Activated B cell treated with CpG ODN at 0.5 μM for 24 hours (primary cell): ENCODE measurements at regions of chr9 and their contacts with region 1.

Region 1: GRCh38 chr9:111896353-111896958 is at the start of gene UGCG:
- DNase-seq: peak; percentile 92
- ATAC-seq: peak; percentile 87
- H3K4me3 Mint-ChIP-seq: peak within 1 kb of the TSS; percentile 96
- H3K27ac Mint-ChIP-seq: peak within 1 kb of the TSS; percentile 93
- H3K4me1 Mint-ChIP-seq: peaks cover 16% of the 10 kb centered on the region
- H3K27me3 Mint-ChIP-seq: no peaks in the 10 kb centered on the region
- CTCF ChIP-seq: no peak
- total RNA-seq, gene UGCG: 103 and 111 TPM in 2 replicates

Region 2: GRCh38 chr9:111631071-111631971 is 265.1 kb before region 1 on chr9 and contains the start of gene DNAJC25:
- CTCF ChIA-PET with region 1: no interaction called
- POLR2A ChIA-PET with region 1: no interaction called
- intact Hi-C with region 1: loop called (anchors 2 kb)
- DNase-seq: peak; percentile 91
- ATAC-seq: peak; percentile 94
- H3K4me3 Mint-ChIP-seq: peak within 1 kb of the TSS; percentile 95
- H3K27ac Mint-ChIP-seq: peak within 1 kb of the TSS; percentile 89
- H3K4me1 Mint-ChIP-seq: peaks cover 29% of the 10 kb centered on the region
- H3K27me3 Mint-ChIP-seq: no peaks in the 10 kb centered on the region
- CTCF ChIP-seq: no peak
- total RNA-seq, gene DNAJC25: 3.5 and 4.3 TPM in 2 replicates

Region 3: DNA sequence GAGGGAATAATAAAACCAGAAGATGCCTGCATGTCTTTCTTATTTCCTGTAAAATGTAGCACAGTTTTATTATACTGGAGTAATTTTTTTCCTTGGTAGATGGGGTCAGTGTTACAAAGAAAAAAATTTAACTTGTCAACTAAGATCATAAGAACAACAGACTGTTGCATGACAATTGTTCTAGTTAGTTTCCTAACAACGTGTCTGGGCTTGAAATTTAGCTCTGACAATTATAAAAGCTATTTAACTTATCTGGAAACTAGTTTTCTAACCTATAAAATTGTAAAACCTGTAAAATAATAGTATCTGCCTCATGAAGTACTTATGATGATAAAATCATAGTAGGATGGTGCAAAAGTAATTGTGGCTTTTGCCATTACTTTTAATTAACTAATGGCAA is 106.6 kb before region 1 on chr9:
- CTCF ChIA-PET with region 1: no interaction called
- POLR2A ChIA-PET with region 1: no interaction called
- intact Hi-C with region 1: no loop called
- DNase-seq: no peak
- ATAC-seq: no peak
- H3K4me3 Mint-ChIP-seq: no peak overlapping the region
- H3K27ac Mint-ChIP-seq: no peak overlapping the region
- H3K4me1 Mint-ChIP-seq: no peaks in the 10 kb centered on the region
- H3K27me3 Mint-ChIP-seq: no peaks in the 10 kb centered on the region
- CTCF ChIP-seq: no peak

Region 4: GRCh38 chr9:111909441-111909840 is 13.0 kb after region 1 on chr9:
- CTCF ChIA-PET with region 1: no interaction called
- POLR2A ChIA-PET with region 1: interaction called, 32 read pairs
- intact Hi-C with region 1: loop called (anchors 1 kb)
- DNase-seq: no peak
- ATAC-seq: peak; percentile 64
- H3K4me3 Mint-ChIP-seq: peak overlapping the region; percentile 65
- H3K27ac Mint-ChIP-seq: peak overlapping the region; percentile 51
- H3K4me1 Mint-ChIP-seq: peaks cover 96% of the 10 kb centered on the region
- H3K27me3 Mint-ChIP-seq: no peaks in the 10 kb centered on the region
- CTCF ChIP-seq: no peak

Region 5: GRCh38 chr9:111983484-111983908 is 87.0 kb after region 1 on chr9:
- CTCF ChIA-PET with region 1: no interaction called
- POLR2A ChIA-PET with region 1: interaction called, 41 read pairs
- intact Hi-C with region 1: loop called (anchors 2 kb)
- DNase-seq: peak; percentile 44
- ATAC-seq: peak; percentile 86
- H3K4me3 Mint-ChIP-seq: peak overlapping the region; percentile 55
- H3K27ac Mint-ChIP-seq: peak overlapping the region; percentile 97
- H3K4me1 Mint-ChIP-seq: peaks cover 66% of the 10 kb centered on the region
- H3K27me3 Mint-ChIP-seq: no peaks in the 10 kb centered on the region
- CTCF ChIP-seq: no peak

Region 6: GRCh38 chr9:112028280-112029221 is 132.1 kb after region 1 on chr9:
- CTCF ChIA-PET with region 1: interaction called, 3 read pairs
- POLR2A ChIA-PET with region 1: interaction called, 122 read pairs
- intact Hi-C with region 1: loop called (anchors 1 kb)
- DNase-seq: peak; percentile 41
- ATAC-seq: peak; percentile 79
- H3K4me3 Mint-ChIP-seq: peak overlapping the region; percentile 82
- H3K27ac Mint-ChIP-seq: peak overlapping the region; percentile 91
- H3K4me1 Mint-ChIP-seq: peaks cover 77% of the 10 kb centered on the region
- H3K27me3 Mint-ChIP-seq: no peaks in the 10 kb centered on the region
- CTCF ChIP-seq: no peak

Region 7: GRCh38 chr9:112074250-112075008 is 178.0 kb after region 1 on chr9:
- CTCF ChIA-PET with region 1: interaction called, 15 read pairs
- POLR2A ChIA-PET with region 1: interaction called, 52 read pairs
- intact Hi-C with region 1: loop called (anchors 1 kb)
- DNase-seq: peak; percentile 25
- ATAC-seq: peak; percentile 83
- H3K4me3 Mint-ChIP-seq: peak overlapping the region; percentile 78
- H3K27ac Mint-ChIP-seq: peak overlapping the region; percentile 91
- H3K4me1 Mint-ChIP-seq: peaks cover 79% of the 10 kb centered on the region
- H3K27me3 Mint-ChIP-seq: no peaks in the 10 kb centered on the region
- CTCF ChIP-seq: peak; percentile 56

Region 8: DNA sequence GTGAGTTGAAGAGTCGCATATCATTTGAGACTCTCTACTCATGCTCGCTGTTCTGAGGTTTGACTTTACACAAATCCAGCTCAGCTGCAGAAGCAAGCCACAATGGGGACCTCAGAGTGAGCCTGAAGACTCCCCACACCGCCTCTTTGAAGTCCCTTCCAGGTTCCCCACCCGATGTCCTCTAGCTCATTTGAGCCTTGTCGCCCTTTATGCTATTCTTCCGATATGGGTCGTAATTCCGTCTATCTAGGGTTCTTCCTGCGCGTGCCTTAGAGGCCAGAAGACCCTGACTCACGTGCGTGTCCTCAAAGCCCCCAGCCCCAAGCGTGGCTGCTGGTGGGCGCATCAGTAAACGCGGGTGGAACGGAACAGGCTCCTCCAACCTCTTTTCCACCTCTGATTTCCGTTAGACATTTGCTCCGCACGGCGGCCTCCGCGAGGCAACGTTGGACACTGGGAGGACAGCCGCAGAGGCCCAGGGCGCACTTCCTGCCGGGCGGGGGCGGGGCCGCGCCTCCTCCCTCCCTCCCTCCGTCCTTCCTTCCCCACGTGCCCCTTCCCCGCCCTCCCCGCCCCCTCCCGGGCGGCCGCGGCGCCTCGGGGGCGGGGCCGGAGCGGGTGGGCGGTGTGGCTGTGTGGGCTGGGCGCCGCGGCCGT is 853.8 kb after region 1 on chr9 and contains the start of gene SNX30:
- CTCF ChIA-PET with region 1: no interaction called
- POLR2A ChIA-PET with region 1: no interaction called
- intact Hi-C with region 1: loop called (anchors 1 kb)
- DNase-seq: peak; percentile 90
- ATAC-seq: peak; percentile 90
- H3K4me3 Mint-ChIP-seq: peak within 1 kb of the TSS; percentile 93
- H3K27ac Mint-ChIP-seq: peak within 1 kb of the TSS; percentile 94
- H3K4me1 Mint-ChIP-seq: peaks cover 42% of the 10 kb centered on the region
- H3K27me3 Mint-ChIP-seq: no peaks in the 10 kb centered on the region
- CTCF ChIP-seq: no peak
- total RNA-seq, gene SNX30: 6.1 and 6.5 TPM in 2 replicates